ENCODE measurements at regions of chr5 and their contacts with region 1.

Region 1: GRCh38 chr5:76641514-76642120 is 18.4 kb upstream of the F2RL2 start:
- DNase-seq: peak; percentile 26 to 78 (median 48)
- ATAC-seq: peak; percentile 57
- H3K4me3 ChIP-seq: no peak overlapping the region
- H3K4me3 Mint-ChIP-seq: no peak overlapping the region
- H3K27ac ChIP-seq: no peak overlapping the region
- H3K27ac Mint-ChIP-seq: no peak overlapping the region
- H3K4me1 ChIP-seq: no peaks in the 10 kb centered on the region
- H3K4me1 Mint-ChIP-seq: no peaks in the 10 kb centered on the region
- H3K27me3 ChIP-seq: no peaks in the 10 kb centered on the region
- H3K27me3 Mint-ChIP-seq: no peaks in the 10 kb centered on the region
- CTCF ChIP-seq: peak; percentile 72

Region 2: GRCh38 chr5:75600535-75600934 is 1041.1 kb before region 1 on chr5:
- CTCF ChIA-PET with region 1: no interaction called
- POLR2A ChIA-PET with region 1: no interaction called
- intact Hi-C with region 1: no loop called
- DNase-seq: no peak
- ATAC-seq: no peak
- H3K4me3 ChIP-seq: no peak overlapping the region
- H3K4me3 Mint-ChIP-seq: no peak overlapping the region
- H3K27ac ChIP-seq: no peak overlapping the region
- H3K27ac Mint-ChIP-seq: no peak overlapping the region
- H3K4me1 ChIP-seq: no peaks in the 10 kb centered on the region
- H3K4me1 Mint-ChIP-seq: peaks cover 14% of the 10 kb centered on the region
- H3K27me3 ChIP-seq: no peaks in the 10 kb centered on the region
- H3K27me3 Mint-ChIP-seq: no peaks in the 10 kb centered on the region
- CTCF ChIP-seq: no peak

Region 3: DNA sequence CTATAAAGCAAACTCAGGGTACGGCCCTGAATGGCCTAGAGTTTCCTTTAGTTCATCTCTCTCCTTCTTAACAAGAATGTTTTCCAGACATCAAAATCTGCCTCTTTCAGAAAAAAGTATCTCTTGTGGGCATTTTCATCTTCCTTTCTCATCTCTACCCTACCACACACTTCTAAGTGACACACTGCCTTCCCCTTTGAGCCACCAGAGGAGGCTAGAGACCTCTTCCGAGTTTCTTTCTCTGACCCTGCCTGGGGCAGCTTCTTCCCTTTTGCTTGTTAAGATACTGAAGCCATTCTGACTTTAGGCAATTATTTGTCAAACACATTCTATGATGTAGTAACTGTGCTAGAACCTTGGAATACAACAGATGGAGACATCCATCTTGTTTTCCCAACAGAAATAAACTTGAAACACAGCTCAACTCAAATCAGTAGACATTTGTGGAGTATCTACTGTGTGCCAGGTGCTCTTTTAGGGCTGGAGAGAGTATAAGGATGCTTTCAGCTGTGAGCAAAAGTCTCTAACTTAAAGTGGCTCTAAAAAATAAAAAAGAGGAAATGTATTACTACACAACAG is 567.0 kb before region 1 on chr5:
- CTCF ChIA-PET with region 1: no interaction called
- POLR2A ChIA-PET with region 1: no interaction called
- intact Hi-C with region 1: loop called (anchors 5 to 10 kb)
- DNase-seq: peak in 5 of 14 experiments; percentile 9 to 50 (median 42)
- ATAC-seq: peak; percentile 66
- H3K4me3 ChIP-seq: no peak overlapping the region
- H3K4me3 Mint-ChIP-seq: no peak overlapping the region
- H3K27ac ChIP-seq: no peak overlapping the region
- H3K27ac Mint-ChIP-seq: no peak overlapping the region
- H3K4me1 ChIP-seq: no peaks in the 10 kb centered on the region
- H3K4me1 Mint-ChIP-seq: no peaks in the 10 kb centered on the region
- H3K27me3 ChIP-seq: peaks cover 8 to 15% of the 10 kb centered on the region in 2 experiments
- H3K27me3 Mint-ChIP-seq: peaks cover 89% of the 10 kb centered on the region
- CTCF ChIP-seq: peak; percentile 41